A673 (cell line): ENCODE measurements at regions of chr14 and their contacts with region 1.

Region 1: GRCh38 chr14:42110166-42110723 is 503.6 kb downstream of the LRFN5 start:
- DNase-seq: peak; percentile 74
- H3K4me3 ChIP-seq: no peak overlapping the region
- H3K27ac ChIP-seq: no peak overlapping the region
- H3K4me1 ChIP-seq: no peaks in the 10 kb centered on the region
- H3K27me3 ChIP-seq: no peaks in the 10 kb centered on the region
- CTCF ChIP-seq: peak; percentile 73

Region 2: DNA sequence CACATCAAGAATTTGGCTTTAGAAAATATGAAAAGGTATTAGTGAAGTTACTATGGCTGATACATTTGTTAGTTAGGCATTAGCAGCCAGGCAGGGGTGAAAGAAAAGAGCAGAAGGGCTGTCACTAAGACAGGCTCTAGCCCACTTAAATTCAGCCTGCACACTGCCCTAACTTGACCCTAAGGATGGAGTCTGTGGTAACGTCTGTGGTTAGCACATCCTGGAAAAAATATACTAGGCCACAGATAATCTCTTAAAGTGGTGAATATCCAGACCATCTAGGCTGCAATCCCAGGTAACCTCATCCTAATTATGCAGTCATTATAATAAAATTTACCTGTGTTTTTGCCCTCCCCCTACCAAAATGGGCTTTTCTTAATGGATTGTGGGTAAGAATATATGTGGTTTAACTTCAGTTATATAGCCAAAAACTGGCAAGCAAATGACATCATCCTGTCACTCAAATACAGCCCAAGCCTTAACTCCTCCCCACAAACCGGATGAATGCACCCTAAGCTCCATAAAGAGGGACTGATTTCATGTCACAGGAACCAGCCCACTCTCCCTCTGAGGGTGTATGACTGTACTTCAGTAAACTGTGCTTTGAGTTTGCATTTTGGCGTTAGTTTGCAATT is 62.7 kb before region 1 on chr14:
- CTCF ChIA-PET with region 1: no interaction called
- POLR2A ChIA-PET with region 1: no interaction called
- intact Hi-C with region 1: no loop called
- DNase-seq: peak; percentile 24
- H3K4me3 ChIP-seq: no peak overlapping the region
- H3K27ac ChIP-seq: no peak overlapping the region
- H3K4me1 ChIP-seq: no peaks in the 10 kb centered on the region
- H3K27me3 ChIP-seq: no peaks in the 10 kb centered on the region
- CTCF ChIP-seq: no peak

Region 3: GRCh38 chr14:43894534-43894933 is 1784.3 kb after region 1 on chr14:
- CTCF ChIA-PET with region 1: no interaction called
- POLR2A ChIA-PET with region 1: no interaction called
- intact Hi-C with region 1: loop called (anchors 10 kb)
- DNase-seq: peak; percentile 62
- H3K4me3 ChIP-seq: no peak overlapping the region
- H3K27ac ChIP-seq: no peak overlapping the region
- H3K4me1 ChIP-seq: no peaks in the 10 kb centered on the region
- H3K27me3 ChIP-seq: no peaks in the 10 kb centered on the region
- CTCF ChIP-seq: peak; percentile 70